Mammary epithelial cell (primary cell): ENCODE measurements at regions of chr1 and their contacts with region 1.

Region 1: GRCh38 chr1:27284425-27285273 is 37.3 kb upstream of the TMEM222 start:
- DNase-seq: peak; percentile 55
- H3K4me3 ChIP-seq: no peak overlapping the region
- H3K27ac ChIP-seq: no peak overlapping the region
- H3K4me1 ChIP-seq: no peaks in the 10 kb centered on the region
- H3K27me3 ChIP-seq: no peaks in the 10 kb centered on the region
- CTCF ChIP-seq: peak; percentile 74 to 92

Region 2: DNA sequence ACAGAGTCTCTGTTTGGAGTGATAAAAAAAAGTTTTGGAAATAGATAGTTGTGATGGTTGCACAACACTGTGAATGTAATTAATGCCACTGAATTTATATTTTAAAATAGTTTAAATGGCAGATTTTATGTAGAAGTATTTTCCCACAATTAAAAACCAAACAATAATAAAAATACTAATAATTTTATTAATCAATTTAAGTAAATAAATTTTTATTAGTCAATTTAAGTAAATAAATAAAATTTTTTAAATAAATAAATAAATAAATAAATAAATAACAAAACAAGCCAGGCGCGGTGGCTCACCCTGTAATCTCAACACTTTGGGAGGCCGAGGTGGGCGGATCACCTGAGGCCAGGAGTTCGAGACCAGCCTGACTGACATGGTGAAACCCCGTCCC is 319.4 kb before region 1 on chr1:
- CTCF ChIA-PET with region 1: no interaction called
- dilution Hi-C with region 1: no loop called
- in situ Hi-C with region 1: no loop called
- intact Hi-C with region 1: loop called (anchors 5 kb)
- DNase-seq: no peak
- H3K4me3 ChIP-seq: no peak overlapping the region
- H3K27ac ChIP-seq: no peak overlapping the region
- H3K4me1 ChIP-seq: peaks cover 24% of the 10 kb centered on the region
- H3K27me3 ChIP-seq: no peaks in the 10 kb centered on the region
- CTCF ChIP-seq: no peak

Region 3: DNA sequence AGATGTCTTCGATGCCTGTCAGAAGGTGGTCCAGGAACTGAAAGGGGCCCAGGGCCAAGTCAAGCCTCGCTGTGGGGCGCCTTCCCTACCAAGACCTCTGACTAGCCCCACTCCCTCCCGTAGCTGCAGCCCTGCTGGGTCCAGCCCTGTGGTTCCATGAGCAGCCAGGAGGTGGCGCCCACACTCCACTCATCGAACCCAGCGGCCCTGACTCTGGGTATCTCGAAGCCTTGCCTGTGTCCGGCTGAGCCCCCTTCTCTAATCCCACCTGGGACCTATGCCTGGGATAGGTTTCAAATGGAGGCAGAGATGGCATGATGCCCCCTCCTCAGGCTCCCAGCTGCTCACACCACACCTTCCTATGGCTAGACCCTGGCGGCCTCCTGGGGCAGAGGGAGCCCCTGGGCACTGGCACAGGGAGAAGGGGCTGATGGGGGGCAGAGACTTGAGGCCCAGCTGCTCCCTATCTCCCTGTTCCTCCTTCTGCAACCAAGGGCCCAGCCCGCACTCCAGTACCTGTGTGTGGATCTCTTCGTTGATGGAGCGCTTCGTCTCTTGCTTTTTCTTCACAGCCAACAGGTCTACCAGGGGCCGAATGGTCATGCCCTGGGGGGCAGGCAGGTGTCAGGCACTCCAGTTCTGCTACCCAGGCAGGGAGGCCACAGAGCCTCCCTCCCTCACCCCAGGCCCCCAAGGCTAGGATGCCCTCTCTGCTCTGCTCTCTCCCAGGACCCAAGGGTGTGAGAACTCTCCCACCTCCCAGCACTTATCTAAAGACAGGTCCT is 181.8 kb before region 1 on chr1:
- CTCF ChIA-PET with region 1: no interaction called
- dilution Hi-C with region 1: no loop called
- in situ Hi-C with region 1: loop called in 1 of 2 experiments (anchors 5 kb)
- intact Hi-C with region 1: loop called (anchors 1 kb)
- DNase-seq: peak; percentile 45
- H3K4me3 ChIP-seq: no peak overlapping the region
- H3K27ac ChIP-seq: no peak overlapping the region
- H3K4me1 ChIP-seq: peaks cover 40% of the 10 kb centered on the region
- H3K27me3 ChIP-seq: no peaks in the 10 kb centered on the region
- CTCF ChIP-seq: peak; percentile 82 to 94

Region 4: DNA sequence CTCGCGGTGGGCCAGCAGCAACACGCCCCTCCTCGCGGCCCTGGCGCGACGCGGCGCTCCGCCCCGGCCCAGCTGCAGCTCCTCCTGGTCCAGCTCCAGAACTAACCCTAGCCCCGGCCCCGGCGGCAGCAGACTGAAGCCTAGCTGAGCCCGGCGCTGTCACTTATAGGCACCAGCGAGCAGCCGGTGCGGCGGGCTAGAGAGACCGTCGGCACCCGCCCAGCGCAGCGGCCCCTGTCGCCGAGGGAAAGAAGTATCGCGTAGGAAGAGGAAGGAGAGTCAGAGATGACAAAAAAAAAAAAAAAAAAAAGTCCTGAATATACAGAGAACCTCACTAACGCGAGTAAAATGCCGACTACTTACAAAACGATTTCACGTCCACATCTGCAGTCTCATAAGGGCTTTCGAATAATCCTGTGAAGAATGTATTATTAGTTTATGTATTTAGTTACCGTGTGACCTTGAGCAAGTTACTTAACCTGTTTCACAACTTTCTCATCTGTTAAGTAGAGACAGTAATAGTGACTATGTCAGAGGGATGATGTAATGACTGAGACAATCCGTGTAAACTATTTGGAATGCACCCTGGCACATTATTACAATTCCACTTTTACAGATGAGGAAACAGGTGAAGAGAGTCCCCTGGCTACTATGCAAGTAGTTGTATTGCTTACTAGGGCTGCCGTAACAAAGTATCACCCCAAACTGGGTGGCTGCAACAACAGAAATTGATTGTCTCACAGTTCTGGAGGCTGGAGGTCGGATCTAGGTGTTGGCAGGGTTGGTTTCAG is 129.5 kb before region 1 on chr1 and contains the start of gene SLC9A1:
- CTCF ChIA-PET with region 1: no interaction called
- dilution Hi-C with region 1: no loop called
- in situ Hi-C with region 1: no loop called
- intact Hi-C with region 1: loop called (anchors 1 kb)
- DNase-seq: peak; percentile 89
- H3K4me3 ChIP-seq: peak within 1 kb of the TSS; percentile 66 to 76 (median 69)
- H3K27ac ChIP-seq: peak within 1 kb of the TSS; percentile 89
- H3K4me1 ChIP-seq: peaks cover 37% of the 10 kb centered on the region
- H3K27me3 ChIP-seq: no peaks in the 10 kb centered on the region
- CTCF ChIP-seq: peak; percentile 72 to 91
- total RNA-seq, gene SLC9A1: 9.5 to 124 TPM

Region 5: GRCh38 chr1:27234049-27234882 is 50.4 kb before region 1 on chr1 and contains the start of gene WDTC1:
- CTCF ChIA-PET with region 1: no interaction called
- dilution Hi-C with region 1: no loop called
- in situ Hi-C with region 1: no loop called
- intact Hi-C with region 1: loop called (anchors 2 kb)
- DNase-seq: peak; percentile 96
- H3K4me3 ChIP-seq: peak within 1 kb of the TSS; percentile 68 to 72 (median 71)
- H3K27ac ChIP-seq: peak within 1 kb of the TSS; percentile 31
- H3K4me1 ChIP-seq: peaks cover 15% of the 10 kb centered on the region
- H3K27me3 ChIP-seq: no peaks in the 10 kb centered on the region
- CTCF ChIP-seq: no peak
- total RNA-seq, gene WDTC1: 29.4 to 39.8 TPM

Region 6: DNA sequence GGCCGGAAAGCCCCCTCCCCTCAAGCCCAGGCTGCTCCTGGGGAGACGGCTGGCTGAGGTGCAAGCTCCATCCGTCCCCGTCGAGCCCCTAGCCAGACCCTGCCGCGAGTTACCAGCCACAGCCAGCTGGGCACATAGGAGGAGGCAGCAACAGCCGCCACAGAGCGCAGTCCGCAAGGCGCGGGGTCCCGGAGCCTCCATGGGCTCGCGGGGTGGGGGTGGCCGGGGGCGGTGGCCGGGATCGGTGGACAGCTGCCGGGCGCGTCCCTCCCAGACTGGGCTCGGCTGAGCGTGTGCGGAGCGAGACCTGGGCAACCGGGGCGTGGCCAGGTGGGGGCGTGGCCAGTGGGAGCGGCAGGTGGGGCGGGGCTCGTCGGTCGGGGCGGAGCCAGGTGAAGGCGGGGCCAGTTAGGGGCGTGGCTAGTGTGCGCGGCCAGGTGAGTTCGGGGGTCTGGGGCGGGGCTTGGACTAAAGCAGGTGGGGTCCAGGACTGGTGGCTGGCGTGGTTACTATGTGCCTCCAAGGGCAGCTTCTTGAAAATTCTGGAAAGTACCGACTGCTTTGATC is 98.5 kb after region 1 on chr1 and contains the start of gene CD164L2:
- CTCF ChIA-PET with region 1: interaction called, 14 read pairs
- dilution Hi-C with region 1: no loop called
- in situ Hi-C with region 1: no loop called
- intact Hi-C with region 1: no loop called
- DNase-seq: peak; percentile 54
- H3K4me3 ChIP-seq: peak within 1 kb of the TSS; percentile 12 to 43 (median 39)
- H3K27ac ChIP-seq: no peak within 1 kb of the TSS
- H3K4me1 ChIP-seq: peaks cover 13% of the 10 kb centered on the region
- H3K27me3 ChIP-seq: no peaks in the 10 kb centered on the region
- CTCF ChIP-seq: no peak
- total RNA-seq, gene CD164L2: 1.7 to 2.7 TPM